Sciatic nerve (tissue), 2 donors: ENCODE measurements at regions of chr4 and their contacts with region 1.

Region 1: DNA sequence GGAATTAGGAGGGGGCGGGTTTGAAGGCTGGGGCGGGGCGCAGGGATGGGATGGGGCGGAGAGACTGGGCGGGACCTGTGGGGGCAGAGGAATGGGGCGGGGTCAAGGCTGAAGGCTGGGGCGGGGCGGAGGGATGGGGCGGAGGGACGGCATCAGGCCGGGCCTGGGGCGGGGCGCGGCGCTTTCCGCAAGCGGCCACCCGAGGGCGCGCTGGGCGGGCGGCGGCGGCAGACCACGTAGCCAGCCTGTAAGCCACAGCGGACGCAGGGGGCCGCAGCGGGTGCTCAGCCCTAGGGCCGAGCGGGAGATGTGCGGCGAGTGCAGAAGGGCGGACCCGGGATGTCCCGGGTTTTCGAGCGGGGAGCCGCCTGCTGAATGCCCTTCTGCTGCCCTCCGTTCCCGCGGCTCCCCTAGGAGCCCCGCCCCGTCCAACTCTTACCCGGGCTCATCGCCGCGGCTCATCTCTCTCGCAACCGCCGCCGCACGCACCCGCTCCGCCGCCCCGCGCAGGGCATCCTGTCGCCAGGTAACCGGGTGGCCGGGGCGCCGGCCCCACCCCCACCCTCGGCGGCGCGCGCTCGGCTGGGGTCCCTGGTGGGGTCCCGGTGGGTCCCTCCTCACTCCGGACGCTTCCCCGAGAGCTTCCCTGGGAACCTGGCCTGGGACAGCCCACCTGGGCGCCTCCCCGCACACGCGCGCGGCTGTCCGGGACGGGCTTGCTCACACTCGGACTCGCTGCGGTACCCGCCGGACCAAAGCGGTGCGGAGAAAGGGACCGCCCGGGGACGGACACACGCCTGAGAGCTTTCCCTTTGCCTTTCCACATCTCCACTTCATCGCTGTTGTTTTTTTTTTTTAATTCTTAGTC is at the start of gene CCDC110:
- DNase-seq: peak; percentile 98
- ATAC-seq: peak; percentile 98
- total RNA-seq, gene CCDC110: 0.36 TPM

Region 2: DNA sequence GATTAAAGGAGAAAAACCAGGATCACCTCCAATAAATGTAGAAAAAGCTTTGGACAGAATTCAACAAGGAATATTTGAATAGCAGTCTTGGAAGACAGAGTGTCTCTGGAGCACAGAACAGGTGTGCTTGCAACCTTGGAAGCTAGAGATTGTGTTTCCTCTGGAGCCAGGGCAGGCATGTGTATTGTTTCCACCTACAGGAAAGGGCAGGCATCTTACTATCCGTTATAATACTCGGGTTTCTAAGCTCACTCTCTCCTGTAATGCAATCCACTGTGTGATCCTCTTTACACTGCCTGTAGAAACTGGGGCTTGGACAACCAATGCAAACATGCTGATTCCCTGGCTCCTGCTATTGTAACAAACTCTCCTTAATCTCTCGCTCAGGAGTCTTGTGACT is 14.3 kb before region 1 on chr4:
- intact Hi-C with region 1: no loop called
- DNase-seq: no peak
- ATAC-seq: no peak

Region 3: GRCh38 chr4:185587427-185588161 is 116.1 kb after region 1 on chr4:
- intact Hi-C with region 1: loop called (anchors 5 kb)
- DNase-seq: no peak
- ATAC-seq: peak; percentile 22